Panc1 (cell line): ENCODE measurements at regions of chr22 and their contacts with region 1.

Region 1: GRCh38 chr22:24564376-24565058 is 8.7 kb downstream of the SNRPD3 start:
- DNase-seq: no peak
- ATAC-seq: 0 out of 2 replicates have a peak, but pooled peaks have one; percentile 53
- H3K4me3 ChIP-seq: no peak overlapping the region
- H3K27ac ChIP-seq: no peak overlapping the region
- H3K4me1 ChIP-seq: no peaks in the 10 kb centered on the region
- H3K27me3 ChIP-seq: no peaks in the 10 kb centered on the region
- CTCF ChIP-seq: no peak

Region 2: GRCh38 chr22:24453853-24454252 is 110.7 kb before region 1 on chr22:
- CTCF ChIA-PET with region 1: no interaction called
- POLR2A ChIA-PET with region 1: interaction called, 14 read pairs
- in situ Hi-C with region 1: no loop called
- intact Hi-C with region 1: no loop called
- DNase-seq: no peak
- ATAC-seq: no peak
- H3K4me3 ChIP-seq: no peak overlapping the region
- H3K27ac ChIP-seq: no peak overlapping the region
- H3K4me1 ChIP-seq: no peaks in the 10 kb centered on the region
- H3K27me3 ChIP-seq: no peaks in the 10 kb centered on the region
- CTCF ChIP-seq: no peak

Region 3: DNA sequence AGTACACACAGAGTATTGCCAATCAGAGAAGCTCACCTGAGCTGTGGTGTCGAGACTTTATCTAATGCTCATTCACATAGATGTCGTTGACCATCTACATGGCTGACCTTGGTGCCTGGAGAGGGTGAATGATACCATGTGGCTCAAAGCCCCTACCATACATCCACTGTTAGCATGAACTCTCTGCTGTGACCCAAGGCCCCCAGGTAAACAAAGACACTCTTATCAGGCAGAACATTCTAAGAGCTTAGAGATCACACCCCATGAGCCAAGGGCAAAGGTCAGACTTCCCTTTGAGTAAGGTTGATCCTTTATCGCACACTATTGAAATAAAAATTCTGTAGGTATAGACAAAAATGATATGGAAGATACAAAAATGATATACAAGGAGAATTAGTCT is 225.0 kb after region 1 on chr22:
- CTCF ChIA-PET with region 1: no interaction called
- POLR2A ChIA-PET with region 1: no interaction called
- in situ Hi-C with region 1: no loop called
- intact Hi-C with region 1: no loop called
- DNase-seq: no peak
- ATAC-seq: no peak
- H3K4me3 ChIP-seq: no peak overlapping the region
- H3K27ac ChIP-seq: no peak overlapping the region
- H3K4me1 ChIP-seq: no peaks in the 10 kb centered on the region
- H3K27me3 ChIP-seq: no peaks in the 10 kb centered on the region
- CTCF ChIP-seq: no peak